ENCODE measurements at regions of chr10 and their contacts with region 1.

Region 1: DNA sequence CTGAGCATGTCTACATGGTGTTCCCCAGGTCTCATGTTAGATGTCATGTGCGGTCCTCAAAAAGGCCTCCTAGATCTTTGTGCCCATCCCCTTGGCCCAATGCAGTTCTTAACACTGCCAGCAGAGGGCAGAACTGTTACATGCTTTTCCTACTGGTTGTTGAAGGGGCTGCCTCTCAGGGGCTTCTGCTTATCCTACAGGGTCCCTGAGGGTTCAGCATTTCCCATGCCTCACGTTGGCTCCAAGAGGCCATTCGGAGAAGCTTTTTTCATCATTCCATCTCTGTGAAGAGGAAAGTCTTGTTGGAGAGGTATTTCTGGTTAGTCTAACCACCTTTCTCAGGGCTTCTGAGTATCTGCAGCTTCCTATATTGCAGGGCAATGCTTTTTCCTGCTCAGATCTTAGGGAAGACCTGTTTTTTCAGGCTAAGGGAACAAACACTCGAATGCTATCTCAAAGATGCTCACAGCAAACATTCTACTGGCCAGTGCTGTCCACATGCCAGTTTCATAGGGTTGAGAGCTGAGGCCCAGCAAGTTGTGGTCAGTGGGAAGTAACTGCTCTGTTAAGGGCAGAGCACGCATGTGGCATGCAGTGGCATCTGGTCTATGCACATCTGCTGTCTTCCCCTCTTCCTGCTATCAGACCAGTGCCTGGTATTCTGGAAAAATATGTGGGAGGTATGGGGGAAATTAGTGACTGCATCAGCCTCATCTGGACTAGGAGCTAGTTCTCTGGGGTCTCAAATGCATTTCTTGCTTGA is 31.5 kb downstream of the MBL2 start:
- DNase-seq: peak; percentile 47
- CTCF ChIP-seq: peak; percentile 86

Region 2: DNA sequence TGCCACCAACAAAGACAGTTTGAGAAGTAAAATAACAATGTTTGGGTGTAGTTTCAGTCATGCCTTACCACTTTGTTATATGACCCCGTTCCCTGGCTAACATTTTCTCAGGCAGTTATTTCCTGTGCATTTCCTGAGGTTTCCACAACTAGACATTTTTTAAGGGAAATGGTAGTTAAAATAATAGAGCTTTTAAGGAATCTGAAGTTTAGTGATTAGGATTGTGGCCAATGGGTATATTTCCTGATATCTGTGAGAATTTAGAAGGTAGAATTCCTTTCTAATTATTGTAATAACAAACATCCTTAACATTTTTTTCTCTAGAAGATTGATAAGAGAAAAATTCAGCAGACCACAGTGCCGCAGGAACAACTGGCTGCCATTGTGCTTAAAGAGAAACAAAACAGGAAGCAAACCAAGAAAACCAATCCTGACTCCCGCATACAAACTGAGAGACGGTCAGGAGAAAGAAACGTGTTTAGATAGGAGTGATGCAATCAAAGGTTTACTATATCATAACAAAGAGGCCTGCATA is 162.2 kb before region 1 on chr10:
- CTCF ChIA-PET with region 1: no interaction called
- POLR2A ChIA-PET with region 1: no interaction called
- DNase-seq: no peak
- CTCF ChIP-seq: no peak

Region 3: GRCh38 chr10:52729271-52730104 is 11.6 kb before region 1 on chr10:
- CTCF ChIA-PET with region 1: interaction called, 12 read pairs
- POLR2A ChIA-PET with region 1: no interaction called
- DNase-seq: peak; percentile 33
- CTCF ChIP-seq: peak; percentile 31

Region 4: GRCh38 chr10:52755297-52756062 is 14.4 kb after region 1 on chr10:
- CTCF ChIA-PET with region 1: interaction called, 26 read pairs
- POLR2A ChIA-PET with region 1: no interaction called
- DNase-seq: no peak
- CTCF ChIP-seq: no peak

Region 5: GRCh38 chr10:52762088-52762487 is 21.0 kb after region 1 on chr10:
- CTCF ChIA-PET with region 1: interaction called, 26 read pairs
- POLR2A ChIA-PET with region 1: no interaction called
- DNase-seq: no peak
- CTCF ChIP-seq: no peak

Region 6: DNA sequence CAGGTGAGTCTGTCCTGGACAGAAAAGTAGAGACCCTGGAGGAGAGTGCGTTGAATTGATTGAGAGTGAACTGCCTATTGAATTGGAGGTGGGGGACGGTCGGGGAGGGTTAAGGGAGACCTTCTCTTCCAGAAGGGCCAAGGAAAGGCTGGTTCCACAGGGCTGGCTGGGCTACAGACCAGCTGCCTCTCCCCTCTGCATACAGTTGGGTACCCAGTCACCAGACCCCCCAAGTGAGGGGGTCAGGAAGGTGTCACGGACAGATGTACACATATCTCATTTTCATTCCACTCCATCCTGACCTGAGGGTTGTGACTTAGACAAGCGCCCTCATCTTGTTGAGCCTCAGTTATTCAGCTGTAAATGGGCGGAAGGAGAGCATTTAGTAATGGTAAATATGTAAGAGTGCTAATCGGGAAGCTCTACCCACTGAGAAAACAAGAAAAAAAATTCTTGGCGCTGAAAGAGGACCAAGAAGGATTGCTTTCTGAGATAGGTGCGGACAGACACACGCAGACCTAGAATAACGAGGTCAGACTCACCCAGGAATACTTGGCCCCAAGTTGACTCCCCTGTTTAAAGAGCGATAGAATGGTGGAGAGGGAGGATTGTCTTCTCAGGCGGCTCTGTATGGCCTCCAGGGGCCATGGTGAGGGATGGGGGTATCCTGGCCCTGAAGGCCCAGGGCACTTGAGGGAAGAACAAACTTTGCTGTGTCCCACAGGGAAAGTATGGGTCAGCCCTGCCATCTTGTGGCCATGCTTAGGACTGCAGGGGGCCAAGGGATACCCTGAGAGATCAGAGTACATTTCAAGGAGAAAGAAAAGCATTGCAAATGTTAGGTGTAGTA is 38.7 kb after region 1 on chr10:
- CTCF ChIA-PET with region 1: interaction called, 356 read pairs
- POLR2A ChIA-PET with region 1: no interaction called
- DNase-seq: peak; percentile 71
- CTCF ChIP-seq: peak; percentile 94